ENCODE measurements at regions of chr11 and their contacts with region 1.

Region 1: DNA sequence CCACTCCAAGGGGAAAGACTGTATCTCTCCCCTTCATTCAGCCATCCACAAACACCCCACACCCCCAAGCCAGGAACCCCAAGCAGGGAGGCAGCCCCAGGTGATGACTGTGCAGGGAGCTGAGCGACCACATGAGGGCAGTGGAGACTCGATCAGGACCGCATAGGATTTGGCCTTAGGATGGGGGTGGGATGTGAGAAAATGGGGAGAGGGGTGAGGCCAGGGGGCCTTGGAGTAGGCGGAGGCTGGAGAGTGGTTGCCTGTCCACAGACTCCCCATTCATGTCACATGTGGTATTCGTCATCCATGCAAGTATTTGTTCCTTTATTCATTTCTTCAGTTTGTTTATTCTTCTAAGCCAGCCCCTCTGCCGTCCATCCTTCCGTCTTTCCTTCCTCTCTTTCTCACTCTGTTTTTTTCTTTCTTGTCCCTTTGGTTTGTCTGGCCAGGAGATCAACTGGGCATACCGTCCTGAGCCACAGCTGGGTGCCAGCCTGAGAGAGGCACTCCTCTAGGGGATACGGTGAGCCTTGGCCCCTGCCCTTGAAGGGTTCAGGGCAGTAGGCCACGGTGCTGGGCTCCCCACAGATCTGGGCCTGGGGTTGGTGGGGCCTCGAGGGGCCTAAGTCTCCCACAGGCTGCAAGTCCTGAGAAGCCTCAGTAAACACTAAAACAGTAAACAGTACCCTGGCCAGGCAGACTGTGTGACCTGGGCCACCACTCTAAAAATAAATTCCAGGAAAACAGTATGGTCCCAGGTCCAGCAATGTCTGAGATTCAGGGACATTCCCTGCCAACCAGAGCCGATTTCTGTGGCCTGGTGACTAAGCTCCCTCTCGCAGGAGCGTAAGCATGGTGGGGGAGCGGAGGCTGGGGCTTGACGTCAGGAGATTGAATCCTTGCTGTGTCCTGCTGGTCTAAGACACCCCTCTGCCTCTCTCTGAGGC is 2.5 kb upstream of the RHOD start:
- DNase-seq: peak; percentile 52 to 77
- H3K4me3 ChIP-seq: no peak overlapping the region
- H3K27ac ChIP-seq: peak overlapping the region; percentile 64
- H3K4me1 ChIP-seq: peaks cover 48% of the 10 kb centered on the region
- H3K27me3 ChIP-seq: no peaks in the 10 kb centered on the region
- CTCF ChIP-seq: peak; percentile 86

Region 2: DNA sequence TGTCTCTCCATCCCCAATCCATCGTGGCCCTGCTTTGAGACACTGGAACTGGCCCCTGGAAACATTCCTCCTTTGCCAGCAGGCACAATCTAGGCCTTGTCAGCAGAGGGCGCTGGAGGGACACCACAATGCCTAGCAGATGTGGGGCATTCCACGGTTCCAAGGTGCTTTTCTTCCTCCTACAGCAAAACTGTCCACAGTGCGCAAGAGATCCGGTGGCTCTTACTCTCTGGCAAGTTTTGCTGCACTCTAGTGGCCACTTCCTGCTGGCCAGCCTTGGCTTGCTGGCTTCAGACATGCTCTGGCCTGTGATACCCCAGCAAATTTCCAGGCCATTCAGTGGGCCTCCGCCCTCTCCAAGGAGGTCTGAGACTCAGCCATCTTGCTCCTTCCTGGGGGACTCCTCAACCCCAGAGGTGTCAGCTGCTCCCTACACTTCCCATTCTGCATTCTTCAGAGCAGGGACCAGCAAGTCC is 359.4 kb before region 1 on chr11:
- CTCF ChIA-PET with region 1: no interaction called
- POLR2A ChIA-PET with region 1: no interaction called
- intact Hi-C with region 1: loop called (anchors 10 kb)
- DNase-seq: peak; percentile 94 to 96
- H3K4me3 ChIP-seq: no peak overlapping the region
- H3K27ac ChIP-seq: no peak overlapping the region
- H3K4me1 ChIP-seq: no peaks in the 10 kb centered on the region
- H3K27me3 ChIP-seq: no peaks in the 10 kb centered on the region
- CTCF ChIP-seq: peak; percentile 98

Region 3: DNA sequence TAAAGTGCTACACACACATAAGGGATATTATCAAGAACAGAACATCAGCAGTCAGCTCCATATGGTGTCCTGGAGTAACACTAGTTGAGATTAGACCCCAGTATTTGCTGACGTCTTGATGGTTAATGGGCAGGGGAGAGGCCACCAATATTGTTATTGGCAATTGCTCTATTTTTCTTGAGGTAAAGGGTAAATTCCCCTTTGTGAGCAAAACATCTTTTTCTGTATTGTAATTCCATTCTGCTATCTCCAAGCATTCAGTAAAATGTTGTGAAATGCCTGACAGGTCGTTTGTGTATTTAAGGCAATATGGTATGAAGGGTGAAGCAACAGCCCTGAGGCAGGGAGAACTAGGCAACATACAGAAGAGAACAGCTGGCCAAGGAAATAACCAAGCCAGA is 117.9 kb before region 1 on chr11:
- CTCF ChIA-PET with region 1: no interaction called
- POLR2A ChIA-PET with region 1: interaction called, 18 read pairs
- intact Hi-C with region 1: no loop called
- DNase-seq: peak in 1 of 2 experiments; percentile 78
- H3K4me3 ChIP-seq: no peak overlapping the region
- H3K27ac ChIP-seq: no peak overlapping the region
- H3K4me1 ChIP-seq: peaks cover 26% of the 10 kb centered on the region
- H3K27me3 ChIP-seq: no peaks in the 10 kb centered on the region
- CTCF ChIP-seq: no peak

Region 4: DNA sequence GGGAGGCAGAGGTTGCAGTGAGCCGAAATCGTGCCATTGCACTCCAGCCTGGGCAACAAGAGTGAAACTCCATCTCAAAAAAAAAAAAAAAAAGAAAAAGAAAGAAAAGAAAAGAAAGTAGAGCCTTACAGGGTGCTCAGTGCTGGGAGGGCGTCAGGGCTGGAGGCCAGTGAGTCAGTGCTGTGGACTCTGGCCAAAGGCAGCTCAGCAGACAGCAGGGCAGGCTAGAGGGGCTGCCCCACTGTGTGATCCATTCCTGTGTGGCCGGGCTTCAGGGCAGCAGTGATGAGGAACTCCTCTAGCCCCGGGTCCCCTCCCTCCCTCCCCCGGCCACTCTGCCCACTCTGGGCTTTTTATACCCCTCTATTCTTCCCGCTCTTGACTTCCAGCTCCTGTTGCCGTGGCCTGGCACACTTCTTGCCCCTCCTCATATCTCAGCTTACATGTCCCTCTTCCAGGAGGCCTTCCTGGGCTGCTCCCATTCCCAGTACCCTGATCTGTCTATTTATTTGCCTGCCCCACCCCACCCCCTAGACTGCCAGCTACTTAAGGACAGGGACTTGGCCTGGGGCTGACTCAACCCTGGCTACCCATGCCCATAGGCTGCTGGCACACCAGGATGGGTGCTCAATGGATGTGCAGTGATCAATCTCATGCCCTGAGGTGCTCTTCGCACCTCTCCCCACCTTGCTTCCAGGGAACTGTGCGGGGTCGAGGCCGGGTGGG is 21.2 kb before region 1 on chr11:
- CTCF ChIA-PET with region 1: interaction called, 3 read pairs
- POLR2A ChIA-PET with region 1: no interaction called
- intact Hi-C with region 1: loop called (anchors 1 kb)
- DNase-seq: peak; percentile 71 to 79
- H3K4me3 ChIP-seq: peak overlapping the region; percentile 22; the same call in 1 of the 2 replicates
- H3K27ac ChIP-seq: peak overlapping the region; percentile 77
- H3K4me1 ChIP-seq: peaks cover 52% of the 10 kb centered on the region
- H3K27me3 ChIP-seq: no peaks in the 10 kb centered on the region
- CTCF ChIP-seq: no peak

Region 5: GRCh38 chr11:67239783-67240575 is 185.8 kb after region 1 on chr11:
- CTCF ChIA-PET with region 1: no interaction called
- POLR2A ChIA-PET with region 1: interaction called, 3 read pairs
- intact Hi-C with region 1: loop called (anchors 2 kb)
- DNase-seq: peak; percentile 99
- H3K4me3 ChIP-seq: peak overlapping the region; percentile 82
- H3K27ac ChIP-seq: peak overlapping the region; percentile 80
- H3K4me1 ChIP-seq: peaks cover 54% of the 10 kb centered on the region
- H3K27me3 ChIP-seq: no peaks in the 10 kb centered on the region
- CTCF ChIP-seq: no peak

Region 6: GRCh38 chr11:67382276-67383136 is 328.3 kb after region 1 on chr11:
- CTCF ChIA-PET with region 1: no interaction called
- POLR2A ChIA-PET with region 1: no interaction called
- intact Hi-C with region 1: loop called (anchors 5 kb)
- DNase-seq: peak; percentile 66 to 84
- H3K4me3 ChIP-seq: no peak overlapping the region
- H3K27ac ChIP-seq: no peak overlapping the region
- H3K4me1 ChIP-seq: peaks cover 64% of the 10 kb centered on the region
- H3K27me3 ChIP-seq: no peaks in the 10 kb centered on the region
- CTCF ChIP-seq: peak; percentile 99